Right lobe of liver (tissue), 6 donors: ENCODE measurements at regions of chr16 and their contacts with region 1.

Region 1: GRCh38 chr16:57653936-57654335 is 14.2 kb upstream of the ADGRG3 start:
- DNase-seq: peak in 1 of 3 donors; percentile 55
- ATAC-seq: peak; percentile 16 to 49 (median 35)
- H3K4me3 ChIP-seq: no peak overlapping the region
- H3K27ac ChIP-seq: no peak overlapping the region
- H3K4me1 ChIP-seq: no peaks in the 10 kb centered on the region
- H3K27me3 ChIP-seq: no peaks in the 10 kb centered on the region
- CTCF ChIP-seq: no peak
- POLR2A ChIP-seq: no peak

Region 2: DNA sequence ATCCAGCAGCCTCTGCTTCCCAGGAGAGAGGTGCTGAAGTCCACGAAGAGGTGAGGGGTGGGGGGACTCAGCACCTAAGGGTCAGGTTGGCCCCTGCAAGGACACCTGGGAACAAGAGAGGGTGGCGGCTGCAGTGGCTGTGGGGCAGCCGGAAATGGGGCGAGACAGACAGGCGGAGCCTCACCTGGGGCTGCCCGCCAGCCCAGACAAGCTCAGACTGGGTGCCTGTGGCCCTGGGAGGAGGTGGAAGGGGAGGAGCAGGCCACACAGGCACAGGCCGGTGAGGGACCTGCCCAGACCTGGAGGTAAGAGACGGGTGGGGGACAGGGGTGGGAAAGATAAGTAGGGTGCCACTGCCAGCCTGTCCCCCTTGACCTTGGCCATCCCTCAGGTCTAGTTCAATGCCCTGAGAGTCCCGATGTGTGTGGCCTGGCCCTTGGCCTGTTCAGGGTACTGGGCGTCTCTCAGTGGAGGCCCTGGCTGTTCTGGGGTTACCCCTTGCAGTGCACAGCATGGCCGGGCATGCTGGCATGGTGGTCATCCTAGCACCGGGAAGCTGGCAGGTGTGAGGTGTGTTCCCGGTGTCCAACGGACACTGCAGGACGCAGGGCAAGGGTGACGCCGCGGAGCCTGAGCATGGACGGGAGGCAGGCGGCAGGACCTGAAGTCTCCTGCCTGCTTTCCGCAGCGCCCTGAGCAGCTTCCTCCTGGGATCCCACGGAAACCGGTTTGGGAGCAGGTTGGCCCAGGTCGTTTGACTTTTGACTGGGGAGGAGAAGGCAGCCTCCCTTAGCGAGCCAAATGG is 33.9 kb before region 1 on chr16:
- intact Hi-C with region 1: no loop called
- DNase-seq: no peak
- ATAC-seq: peak in 2 of 4 donors; percentile 33 to 42
- H3K4me3 ChIP-seq: no peak overlapping the region
- H3K27ac ChIP-seq: no peak overlapping the region
- H3K4me1 ChIP-seq: no peaks in the 10 kb centered on the region
- H3K27me3 ChIP-seq: no peaks in the 10 kb centered on the region
- CTCF ChIP-seq: no peak
- POLR2A ChIP-seq: no peak

Region 3: GRCh38 chr16:57720142-57720575 is 66.2 kb after region 1 on chr16:
- intact Hi-C with region 1: loop called (anchors 5 kb)
- DNase-seq: peak; percentile 84 to 86 (median 85)
- ATAC-seq: peak; percentile 98 to 99 (median 98)
- H3K4me3 ChIP-seq: no peak overlapping the region
- H3K27ac ChIP-seq: no peak overlapping the region
- H3K4me1 ChIP-seq: no peaks in the 10 kb centered on the region
- H3K27me3 ChIP-seq: no peaks in the 10 kb centered on the region
- CTCF ChIP-seq: peak; percentile 79 to 91 (median 87)
- POLR2A ChIP-seq: no peak

Region 4: GRCh38 chr16:57725554-57726330 is 71.8 kb after region 1 on chr16:
- intact Hi-C with region 1: loop called (anchors 5 kb)
- DNase-seq: no peak
- ATAC-seq: no peak
- H3K4me3 ChIP-seq: no peak overlapping the region
- H3K27ac ChIP-seq: no peak overlapping the region
- H3K4me1 ChIP-seq: no peaks in the 10 kb centered on the region
- H3K27me3 ChIP-seq: no peaks in the 10 kb centered on the region
- CTCF ChIP-seq: no peak
- POLR2A ChIP-seq: no peak

Region 5: DNA sequence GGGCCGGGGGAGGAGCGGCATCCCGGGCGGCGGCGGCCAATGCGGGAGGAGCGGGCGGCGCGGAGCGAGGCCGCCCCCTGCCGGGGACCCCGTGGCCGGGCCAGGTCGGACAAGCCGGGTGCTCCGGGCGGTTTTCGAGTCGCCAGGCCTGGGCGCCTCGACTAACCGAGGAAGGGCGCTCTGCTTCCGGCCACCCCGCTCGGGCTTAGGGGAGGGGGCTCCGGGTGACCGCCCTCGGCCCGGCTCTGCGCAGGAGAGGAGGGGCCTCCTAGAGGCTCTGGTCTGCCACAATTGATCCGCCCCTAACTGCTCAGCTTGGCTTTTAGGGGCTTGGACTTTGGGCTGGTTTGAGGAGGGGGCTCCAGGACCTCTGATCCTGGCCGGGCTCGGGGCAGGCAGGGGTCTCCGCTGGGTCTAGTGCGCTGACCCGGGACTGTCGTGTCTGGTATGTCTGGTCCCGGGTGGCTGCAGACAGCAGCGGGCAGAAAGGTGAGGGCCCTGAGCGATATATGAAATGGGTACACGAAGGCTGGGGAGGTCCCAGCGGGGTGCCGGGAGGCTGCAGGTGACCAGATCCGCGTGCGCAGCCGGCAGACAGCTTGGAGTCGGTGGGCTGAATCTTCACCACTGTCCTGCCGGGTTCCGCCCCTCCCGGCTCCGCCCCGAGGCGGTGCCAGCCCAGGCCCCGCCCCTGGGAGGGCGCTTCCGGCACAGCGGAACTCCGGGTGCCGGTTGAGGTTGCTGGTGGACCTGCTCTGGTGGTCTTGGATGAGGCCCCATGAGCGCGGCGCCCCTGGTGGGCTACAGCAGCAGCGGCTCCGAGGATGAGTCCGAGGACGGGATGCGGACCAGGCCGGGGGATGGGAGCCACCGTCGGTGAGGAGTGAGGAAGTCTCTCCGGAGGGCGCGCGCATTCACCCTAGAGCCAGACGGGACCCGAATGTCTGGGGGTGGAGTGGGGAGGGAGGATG is 347.1 kb after region 1 on chr16 and contains the start of gene USB1:
- intact Hi-C with region 1: no loop called
- DNase-seq: peak; percentile 93 to 94 (median 93)
- ATAC-seq: peak; percentile 89 to 94 (median 91)
- H3K4me3 ChIP-seq: peak within 1 kb of the TSS; percentile 74 to 86 (median 85)
- H3K27ac ChIP-seq: peak within 1 kb of the TSS; percentile 78 to 85 (median 83)
- H3K4me1 ChIP-seq: peaks cover 0 to 13% (median 5%) of the 10 kb centered on the region in 4 donors
- H3K27me3 ChIP-seq: no peaks in the 10 kb centered on the region
- CTCF ChIP-seq: peak; percentile 57 to 97 (median 68)
- POLR2A ChIP-seq: peak; percentile 85
- total RNA-seq, gene USB1: 20.6 to 63.3 (median 25.9) TPM